ENCODE measurements at regions of chr4 and their contacts with region 1.

Region 1: DNA sequence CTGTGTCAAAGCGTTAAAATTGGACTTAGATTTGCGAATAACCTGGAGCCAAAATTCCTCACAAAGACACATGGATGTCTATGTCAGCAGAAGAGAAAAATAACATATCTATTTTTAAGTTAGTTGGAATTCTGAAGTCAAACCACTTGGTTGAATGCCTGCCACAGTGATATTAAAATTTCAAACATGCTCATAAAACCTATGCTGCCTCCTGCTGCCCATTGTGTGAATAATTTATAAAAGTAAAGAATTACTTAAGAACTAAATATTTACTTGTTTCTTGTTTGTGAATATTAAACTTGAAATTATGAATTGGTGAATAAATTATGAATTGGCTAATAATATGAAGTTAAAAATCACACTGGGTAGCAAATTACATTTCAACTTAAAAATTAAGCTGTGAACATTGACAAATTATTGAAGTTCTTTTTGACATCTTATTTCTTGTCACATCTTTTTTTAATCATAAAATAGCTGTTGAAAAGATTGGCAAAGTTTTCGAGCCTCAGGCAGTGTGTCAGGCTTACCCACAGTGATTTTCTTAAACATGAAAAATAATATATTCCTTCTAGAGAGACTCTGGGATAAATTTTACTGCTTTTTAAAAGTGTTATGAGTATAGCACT is 35.4 kb downstream of the FABP2 start:
- DNase-seq: peak in 1 of 2 donors; percentile 28
- ATAC-seq: peak; percentile 73 to 80
- H3K4me3 ChIP-seq: peak overlapping the region in 1 of 4 donors; percentile 6
- H3K27ac ChIP-seq: peak overlapping the region; percentile 64 to 77 (median 69)
- H3K4me1 ChIP-seq: peaks cover 57 to 62% of the 10 kb centered on the region in 2 donors
- H3K27me3 ChIP-seq: no peaks in the 10 kb centered on the region
- CTCF ChIP-seq: peak; percentile 48 to 77 (median 64)
- POLR2A ChIP-seq: no peak

Region 2: GRCh38 chr4:119087121-119087520 is 199.4 kb before region 1 on chr4:
- in situ Hi-C with region 1: no loop called
- intact Hi-C with region 1: loop called (anchors 5 kb)
- DNase-seq: no peak
- ATAC-seq: no peak
- H3K4me3 ChIP-seq: no peak overlapping the region
- H3K27ac ChIP-seq: no peak overlapping the region
- H3K4me1 ChIP-seq: peaks cover 0 to 5% of the 10 kb centered on the region in 2 donors
- H3K27me3 ChIP-seq: no peaks in the 10 kb centered on the region
- CTCF ChIP-seq: peak in 3 of 5 experiments; percentile 17 to 30 (median 26)
- POLR2A ChIP-seq: no peak

Region 3: GRCh38 chr4:119300101-119300978 is 13.8 kb after region 1 on chr4:
- in situ Hi-C with region 1: no loop called
- intact Hi-C with region 1: loop called (anchors 1 kb)
- DNase-seq: peak; percentile 85 to 93
- ATAC-seq: peak; percentile 74 to 86
- H3K4me3 ChIP-seq: peak overlapping the region; percentile 69 to 87 (median 81)
- H3K27ac ChIP-seq: peak overlapping the region; percentile 78 to 94 (median 88)
- H3K4me1 ChIP-seq: peaks cover 25 to 33% of the 10 kb centered on the region in 2 donors
- H3K27me3 ChIP-seq: no peaks in the 10 kb centered on the region
- CTCF ChIP-seq: peak in 2 of 5 experiments; percentile 13 to 14
- POLR2A ChIP-seq: peak; percentile 74 to 75